ENCODE measurements at regions of chr13 and their contacts with region 1.

Region 1: DNA sequence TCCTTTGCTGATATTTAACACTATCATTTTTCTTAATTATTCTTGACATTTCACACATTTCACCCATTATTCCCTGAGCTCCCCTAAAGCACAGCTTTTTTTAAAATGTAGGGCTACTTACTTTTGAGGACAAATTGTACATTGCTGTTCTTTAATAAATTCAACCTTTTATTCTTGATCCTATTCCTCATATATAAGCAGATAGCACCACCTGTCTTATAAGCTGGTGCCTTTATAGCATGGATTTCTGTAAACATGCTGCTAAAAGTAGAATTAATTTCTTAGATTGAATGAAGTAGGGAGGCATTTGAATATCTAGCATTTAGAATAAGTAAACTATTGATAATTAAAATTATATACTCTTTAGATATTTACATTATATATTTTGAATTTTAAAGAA is 603.4 kb upstream of the PCDH9 start:
- DNase-seq: no peak
- H3K4me3 ChIP-seq: no peak overlapping the region
- H3K4me3 Mint-ChIP-seq: no peak overlapping the region
- H3K27ac Mint-ChIP-seq: no peak overlapping the region
- H3K4me1 ChIP-seq: no peaks in the 10 kb centered on the region
- H3K4me1 Mint-ChIP-seq: no peaks in the 10 kb centered on the region
- H3K27me3 ChIP-seq: no peaks in the 10 kb centered on the region
- H3K27me3 Mint-ChIP-seq: no peaks in the 10 kb centered on the region
- CTCF ChIP-seq: no peak

Region 2: DNA sequence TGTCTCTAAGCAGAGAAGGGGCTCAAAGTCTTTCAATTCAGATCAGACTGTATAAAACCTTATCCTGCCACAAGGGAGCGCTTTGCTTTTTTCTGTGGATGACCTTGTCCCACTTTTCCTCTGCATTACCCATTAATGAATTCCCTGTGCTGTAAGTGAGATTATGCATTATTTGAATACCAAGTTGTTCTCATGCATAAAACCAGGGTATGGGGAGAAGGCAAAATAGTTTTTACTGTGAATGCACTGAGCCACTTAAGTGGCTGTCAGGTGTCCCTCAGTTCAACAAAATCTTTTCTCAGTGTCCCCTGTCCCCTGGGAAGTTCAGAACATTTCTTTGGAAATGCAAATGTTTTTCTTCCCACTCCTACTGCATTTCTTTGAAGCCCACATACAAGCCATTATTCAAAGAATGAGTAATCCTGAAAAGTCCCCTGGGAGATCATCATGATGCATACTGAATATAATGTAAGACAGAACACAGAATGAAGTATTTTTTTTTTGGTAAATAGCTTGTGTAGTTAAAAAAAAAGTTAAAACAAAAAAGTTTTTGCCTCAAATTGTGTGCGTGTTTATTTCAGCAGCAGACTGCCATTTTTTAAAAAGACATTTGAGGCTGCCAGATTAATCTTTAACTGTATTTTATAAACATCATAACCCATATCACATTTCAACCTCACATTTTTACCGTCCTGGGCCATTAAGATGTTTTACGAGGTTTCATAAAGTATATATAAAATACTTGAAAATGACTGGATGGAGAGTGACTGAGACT is 96.7 kb before region 1 on chr13:
- CTCF ChIA-PET with region 1: no interaction called
- POLR2A ChIA-PET with region 1: no interaction called
- intact Hi-C with region 1: loop called (anchors 5 kb)
- DNase-seq: peak in 1 of 2 experiments; percentile 38
- H3K4me3 ChIP-seq: no peak overlapping the region
- H3K4me3 Mint-ChIP-seq: no peak overlapping the region
- H3K27ac Mint-ChIP-seq: no peak overlapping the region
- H3K4me1 ChIP-seq: no peaks in the 10 kb centered on the region
- H3K4me1 Mint-ChIP-seq: no peaks in the 10 kb centered on the region
- H3K27me3 ChIP-seq: no peaks in the 10 kb centered on the region
- H3K27me3 Mint-ChIP-seq: peaks cover 6% of the 10 kb centered on the region
- CTCF ChIP-seq: peak; percentile 29 to 33

Region 3: DNA sequence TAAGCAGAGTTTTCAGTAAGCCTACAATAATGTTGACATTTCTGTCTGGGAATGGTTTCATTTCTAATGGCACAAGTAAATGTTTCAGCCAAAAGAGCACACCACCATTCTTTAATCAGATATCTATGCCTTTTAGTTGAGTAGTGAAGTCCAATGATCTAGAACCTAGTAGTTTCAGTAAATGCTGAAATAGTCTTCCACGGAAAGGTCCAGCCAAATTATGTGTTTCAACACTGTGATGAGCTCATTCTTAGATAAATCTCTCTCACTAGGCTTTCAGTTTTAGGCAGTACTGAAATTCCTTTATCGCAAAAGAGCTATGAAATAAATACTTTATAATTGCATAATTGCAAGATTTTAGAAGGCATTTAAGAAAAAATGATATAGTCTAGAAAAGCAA is 213.3 kb after region 1 on chr13:
- CTCF ChIA-PET with region 1: no interaction called
- POLR2A ChIA-PET with region 1: no interaction called
- intact Hi-C with region 1: no loop called
- DNase-seq: no peak
- H3K4me3 ChIP-seq: no peak overlapping the region
- H3K4me3 Mint-ChIP-seq: no peak overlapping the region
- H3K27ac Mint-ChIP-seq: no peak overlapping the region
- H3K4me1 ChIP-seq: no peaks in the 10 kb centered on the region
- H3K4me1 Mint-ChIP-seq: no peaks in the 10 kb centered on the region
- H3K27me3 ChIP-seq: no peaks in the 10 kb centered on the region
- H3K27me3 Mint-ChIP-seq: no peaks in the 10 kb centered on the region
- CTCF ChIP-seq: no peak